Left cardiac atrium (tissue), 4 donors: ENCODE measurements at regions of chrX and their contacts with region 1.

Region 1: GRCh38 chrX:40663880-40664633 is 16.7 kb upstream of the CXorf38 start:
- DNase-seq: no peak
- ATAC-seq: no peak

Region 2: DNA sequence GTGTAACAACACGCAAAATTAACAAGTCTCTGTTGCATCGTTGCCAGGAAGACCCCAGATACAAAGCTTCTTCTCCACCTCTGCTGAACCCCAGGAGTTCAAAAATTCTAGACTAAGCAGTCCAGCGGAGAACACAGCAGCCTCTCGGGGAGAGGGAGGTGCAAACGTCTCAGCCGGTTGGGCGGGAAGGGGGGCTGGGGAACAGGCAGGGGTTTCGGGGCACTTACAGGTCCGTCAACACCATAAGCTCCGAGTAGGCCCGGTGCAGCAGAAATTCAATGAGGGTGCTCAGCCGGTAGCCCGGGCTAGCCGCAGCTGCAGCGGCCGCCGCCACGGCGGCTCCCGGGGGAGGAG is 70.9 kb after region 1 on chrX:
- intact Hi-C with region 1: loop called in 1 of 2 experiments (anchors 5 kb)
- DNase-seq: peak; percentile 30
- ATAC-seq: peak; percentile 29 to 34

Region 3: GRCh38 chrX:40784516-40785151 is 120.6 kb after region 1 on chrX:
- intact Hi-C with region 1: loop called in 1 of 2 experiments (anchors 10 kb)
- DNase-seq: no peak
- ATAC-seq: no peak

Region 4: GRCh38 chrX:41045960-41046567 is 382.0 kb after region 1 on chrX:
- intact Hi-C with region 1: no loop called
- DNase-seq: peak; percentile 33
- ATAC-seq: peak; percentile 62 to 71